Activated CD4-positive, alpha-beta T cell treated with anti-CD3 and anti-CD28 coated beads, Interleukin-2, amount 10 ng/mL, durations not matched to agents 7 days and 5 days (primary cell): ENCODE measurements at regions of chr11 and their contacts with region 1.

Region 1: GRCh38 chr11:120235024-120235861 is 4.7 kb upstream of the POU2F3 start:
- DNase-seq: peak; percentile 65
- H3K4me3 Mint-ChIP-seq: no peak overlapping the region
- H3K27ac Mint-ChIP-seq: peak overlapping the region; percentile 47
- H3K4me1 Mint-ChIP-seq: no peaks in the 10 kb centered on the region
- H3K27me3 Mint-ChIP-seq: peaks cover 53% of the 10 kb centered on the region

Region 2: GRCh38 chr11:120219232-120219937 is 15.9 kb before region 1 on chr11:
- CTCF ChIA-PET with region 1: no interaction called
- POLR2A ChIA-PET with region 1: no interaction called
- DNase-seq: no peak
- H3K4me3 Mint-ChIP-seq: no peak overlapping the region
- H3K27ac Mint-ChIP-seq: no peak overlapping the region
- H3K4me1 Mint-ChIP-seq: peaks cover 5% of the 10 kb centered on the region
- H3K27me3 Mint-ChIP-seq: peaks cover 9% of the 10 kb centered on the region

Region 3: GRCh38 chr11:120248551-120249278 is 13.5 kb after region 1 on chr11:
- CTCF ChIA-PET with region 1: interaction called, 12 read pairs
- POLR2A ChIA-PET with region 1: no interaction called
- DNase-seq: no peak
- H3K4me3 Mint-ChIP-seq: no peak overlapping the region
- H3K27ac Mint-ChIP-seq: peak overlapping the region; percentile 16
- H3K4me1 Mint-ChIP-seq: peaks cover 48% of the 10 kb centered on the region
- H3K27me3 Mint-ChIP-seq: peaks cover 70% of the 10 kb centered on the region

Region 4: DNA sequence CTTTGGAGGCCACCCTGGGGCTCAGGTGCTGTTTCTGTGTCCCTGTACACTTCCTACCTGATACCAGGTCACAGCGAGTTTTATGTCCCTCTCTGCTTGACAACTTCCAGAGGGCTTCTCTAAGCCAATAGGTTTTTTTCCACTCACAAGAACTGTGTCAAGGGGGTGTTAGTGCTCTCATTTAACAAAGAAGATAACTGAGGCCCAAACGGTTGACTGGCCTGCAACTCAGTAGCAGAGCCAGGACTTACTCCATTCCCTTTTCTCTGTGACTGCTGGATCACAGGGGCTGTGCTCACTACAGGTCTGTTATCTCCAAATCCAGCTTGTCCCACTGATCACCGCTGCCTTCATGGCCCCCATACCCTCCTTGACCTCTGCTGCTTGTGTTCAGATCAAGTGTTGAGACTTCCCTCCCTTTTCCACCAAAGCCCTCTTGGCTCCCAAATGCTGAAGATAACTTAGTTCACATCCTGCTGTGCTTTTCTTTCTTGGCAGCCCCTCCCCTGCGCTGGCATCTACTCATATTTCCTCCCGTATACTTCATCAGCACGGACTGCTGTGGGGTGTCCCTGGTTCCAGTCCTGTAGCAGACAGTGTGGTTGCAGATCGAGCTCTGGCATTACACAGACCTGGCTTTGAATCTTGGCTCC is 46.0 kb after region 1 on chr11:
- CTCF ChIA-PET with region 1: no interaction called
- POLR2A ChIA-PET with region 1: no interaction called
- DNase-seq: no peak
- H3K4me3 Mint-ChIP-seq: no peak overlapping the region
- H3K27ac Mint-ChIP-seq: no peak overlapping the region
- H3K4me1 Mint-ChIP-seq: no peaks in the 10 kb centered on the region
- H3K27me3 Mint-ChIP-seq: peaks cover 14% of the 10 kb centered on the region

Region 5: DNA sequence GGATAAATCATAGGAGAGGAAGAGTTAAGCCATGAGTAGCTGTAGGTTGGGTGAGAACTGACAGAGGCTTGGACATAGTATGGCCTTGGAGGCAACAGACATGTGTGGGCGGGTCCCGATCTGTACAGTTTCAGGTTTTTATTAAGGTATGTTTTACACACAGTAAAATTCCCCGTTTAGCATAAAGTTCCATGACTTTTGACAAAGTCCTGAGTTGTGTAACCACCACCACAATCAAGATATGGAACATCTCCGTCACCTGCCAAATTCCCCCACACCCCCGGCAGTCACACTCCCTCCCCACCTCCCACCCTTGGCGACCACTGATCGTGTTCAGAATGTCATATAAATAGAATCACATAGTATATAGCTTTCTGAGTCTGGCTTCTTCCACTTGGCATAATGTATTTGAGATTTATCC is 344.4 kb after region 1 on chr11:
- CTCF ChIA-PET with region 1: no interaction called
- POLR2A ChIA-PET with region 1: no interaction called
- DNase-seq: no peak
- H3K4me3 Mint-ChIP-seq: no peak overlapping the region
- H3K27ac Mint-ChIP-seq: no peak overlapping the region
- H3K4me1 Mint-ChIP-seq: no peaks in the 10 kb centered on the region
- H3K27me3 Mint-ChIP-seq: peaks cover 23% of the 10 kb centered on the region